Sigmoid colon (tissue), 7 donors: ENCODE measurements at regions of chr10 and their contacts with region 1.

Region 1: GRCh38 chr10:15209827-15210509 is 41.5 kb upstream of the NMT2 start:
- DNase-seq: peak; percentile 88
- H3K4me3 ChIP-seq: no peak overlapping the region
- H3K27ac ChIP-seq: no peak overlapping the region
- H3K4me1 ChIP-seq: peaks cover 0 to 10% (median 3%) of the 10 kb centered on the region in 4 donors
- H3K27me3 ChIP-seq: no peaks in the 10 kb centered on the region
- CTCF ChIP-seq: peak; percentile 52 to 85 (median 75)
- EP300 ChIP-seq: no peak
- POLR2A ChIP-seq: no peak

Region 2: GRCh38 chr10:14723052-14723689 is 486.8 kb before region 1 on chr10:
- intact Hi-C with region 1: no loop called
- DNase-seq: no peak
- H3K4me3 ChIP-seq: no peak overlapping the region
- H3K27ac ChIP-seq: no peak overlapping the region
- H3K4me1 ChIP-seq: no peaks in the 10 kb centered on the region
- H3K27me3 ChIP-seq: no peaks in the 10 kb centered on the region
- CTCF ChIP-seq: no peak
- EP300 ChIP-seq: no peak
- POLR2A ChIP-seq: no peak

Region 3: DNA sequence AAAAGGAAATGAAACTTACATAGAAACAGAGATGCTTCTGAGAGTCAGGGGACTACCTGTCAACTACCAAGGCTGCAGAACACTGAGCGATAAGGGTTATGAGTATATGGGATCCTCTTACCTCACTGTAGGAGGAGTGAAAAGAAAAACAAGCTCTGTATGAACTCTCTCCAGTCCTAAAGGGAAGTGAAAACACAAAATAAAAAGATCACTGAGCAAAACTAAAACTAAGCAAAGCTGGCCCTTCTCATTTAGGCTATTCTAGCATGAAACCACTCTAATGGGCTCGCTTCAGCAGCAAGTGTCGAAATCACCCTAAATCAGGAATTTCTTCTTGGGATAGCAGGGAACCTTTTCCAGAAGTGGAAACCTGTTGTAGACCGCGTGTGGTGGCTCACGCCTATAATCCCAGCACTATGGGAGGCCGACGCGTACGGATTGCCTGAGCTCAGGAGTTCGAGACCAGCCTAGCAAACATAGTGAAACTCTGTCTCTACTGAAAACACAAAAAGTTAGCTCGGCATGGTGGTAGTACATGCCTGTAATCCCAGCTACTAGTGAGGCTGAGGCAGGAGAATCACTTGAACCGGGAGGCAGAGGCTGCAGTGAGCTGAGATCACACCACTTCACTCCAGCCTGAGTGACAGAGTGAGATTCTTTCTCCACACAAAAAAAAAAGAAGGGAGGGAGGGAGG is 283.1 kb before region 1 on chr10:
- intact Hi-C with region 1: no loop called
- DNase-seq: no peak
- H3K4me3 ChIP-seq: no peak overlapping the region
- H3K27ac ChIP-seq: no peak overlapping the region
- H3K4me1 ChIP-seq: no peaks in the 10 kb centered on the region
- H3K27me3 ChIP-seq: no peaks in the 10 kb centered on the region
- CTCF ChIP-seq: no peak
- EP300 ChIP-seq: no peak
- POLR2A ChIP-seq: no peak

Region 4: DNA sequence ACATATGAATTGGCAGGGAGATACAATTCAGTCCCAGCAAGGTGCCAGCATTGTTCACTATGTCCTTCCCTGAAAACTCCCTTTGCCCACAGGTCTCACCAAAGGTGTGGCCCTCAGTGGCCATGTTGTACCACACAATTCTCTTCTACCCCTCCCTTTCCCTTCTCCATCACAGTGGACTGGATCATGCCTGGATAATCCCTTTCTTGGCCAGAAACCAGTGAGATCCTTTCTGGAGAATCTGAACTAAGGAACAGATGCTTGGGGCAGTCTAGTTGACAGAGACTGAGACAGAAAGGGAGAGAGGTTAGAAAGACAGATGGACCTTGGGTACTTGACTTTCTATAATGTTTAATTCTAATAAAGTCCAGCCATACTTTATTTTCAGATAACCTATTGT is 51.0 kb before region 1 on chr10:
- intact Hi-C with region 1: no loop called
- DNase-seq: no peak
- H3K4me3 ChIP-seq: no peak overlapping the region
- H3K27ac ChIP-seq: no peak overlapping the region
- H3K4me1 ChIP-seq: peaks cover 0 to 8% (median 0%) of the 10 kb centered on the region in 4 donors
- H3K27me3 ChIP-seq: no peaks in the 10 kb centered on the region
- CTCF ChIP-seq: no peak
- EP300 ChIP-seq: no peak
- POLR2A ChIP-seq: no peak

Region 5: DNA sequence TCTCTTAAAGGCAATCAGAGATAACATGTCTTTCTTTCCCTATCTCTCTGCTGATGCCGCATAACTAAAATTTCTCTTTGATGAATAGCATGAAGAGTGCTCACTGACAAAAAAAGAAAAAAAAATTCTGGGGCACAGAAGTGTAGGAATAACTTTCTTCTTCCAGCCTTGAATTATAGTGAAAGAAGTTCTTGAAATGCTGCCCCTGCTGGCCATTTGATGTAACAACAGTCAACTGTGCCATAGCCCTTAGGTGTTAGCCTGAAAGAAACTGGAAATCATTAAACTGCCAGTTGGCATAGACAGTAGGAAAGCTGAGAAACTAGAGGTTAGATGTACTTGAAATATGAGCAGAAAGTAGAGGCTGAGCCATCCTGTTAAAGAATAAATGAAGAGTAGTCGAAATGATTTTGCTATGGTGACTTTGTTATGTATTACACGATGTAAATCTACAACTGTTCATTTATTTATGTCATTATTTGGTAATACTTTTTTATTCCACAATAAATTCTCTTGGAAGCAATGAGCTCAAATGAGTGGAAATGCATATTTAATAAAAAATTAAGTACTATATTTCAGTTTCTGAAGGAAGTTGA is 209.4 kb after region 1 on chr10:
- intact Hi-C with region 1: loop called (anchors 2 kb)
- DNase-seq: no peak
- H3K4me3 ChIP-seq: no peak overlapping the region
- H3K27ac ChIP-seq: no peak overlapping the region
- H3K4me1 ChIP-seq: no peaks in the 10 kb centered on the region
- H3K27me3 ChIP-seq: no peaks in the 10 kb centered on the region
- CTCF ChIP-seq: peak; percentile 30 to 70 (median 48)
- EP300 ChIP-seq: no peak
- POLR2A ChIP-seq: no peak

Region 6: GRCh38 chr10:15802375-15802949 is 592.5 kb after region 1 on chr10:
- intact Hi-C with region 1: no loop called
- DNase-seq: no peak
- H3K4me3 ChIP-seq: no peak overlapping the region
- H3K27ac ChIP-seq: no peak overlapping the region
- H3K4me1 ChIP-seq: peaks cover 0 to 34% (median 19%) of the 10 kb centered on the region in 4 donors
- H3K27me3 ChIP-seq: no peaks in the 10 kb centered on the region
- CTCF ChIP-seq: no peak
- EP300 ChIP-seq: no peak
- POLR2A ChIP-seq: no peak